ENCODE measurements at regions of chr11 and their contacts with region 1.

Region 1: DNA sequence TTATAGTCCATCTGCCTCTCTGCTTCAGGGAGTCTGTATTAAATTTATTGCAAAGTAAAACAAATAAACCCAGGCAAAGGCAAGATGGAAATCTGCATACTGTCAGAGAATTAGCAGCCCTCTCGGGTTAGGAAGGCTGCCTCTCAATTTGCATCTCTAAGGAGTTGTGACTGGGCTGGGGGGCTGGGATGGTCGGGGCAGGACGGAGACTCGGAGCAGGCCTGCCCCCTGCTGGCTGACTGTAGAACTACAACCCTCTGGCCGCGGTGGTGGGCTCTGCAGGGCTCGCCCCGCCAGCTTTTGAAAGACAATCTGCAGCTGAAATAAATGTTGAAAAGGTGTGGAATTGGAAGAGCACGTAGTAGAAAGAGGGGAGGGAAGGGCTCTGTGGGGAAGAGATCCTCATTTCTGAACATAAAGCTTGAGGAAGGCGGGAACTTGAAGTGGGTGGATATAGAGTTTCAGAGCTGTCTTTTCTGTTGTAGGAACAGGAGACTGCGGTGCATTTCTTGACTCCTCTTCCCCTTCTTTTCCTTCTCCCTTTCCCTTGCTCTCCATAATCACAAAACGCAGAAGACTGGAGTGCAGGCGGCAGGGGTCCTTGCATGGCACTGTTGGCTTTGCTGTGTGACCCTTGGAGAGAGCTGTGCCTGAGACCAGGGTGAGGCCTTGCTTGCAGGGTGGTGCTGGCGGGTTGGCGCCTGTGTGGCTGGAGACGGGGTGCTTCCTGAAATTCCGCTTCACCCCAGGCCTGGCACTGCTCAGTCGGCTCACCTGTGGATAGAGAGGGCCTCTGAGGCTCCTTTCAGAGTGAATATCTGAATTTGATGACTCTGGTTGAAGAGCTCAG is 22.6 kb upstream of the PKNOX2 start:
- DNase-seq: no peak
- H3K4me3 ChIP-seq: no peak overlapping the region
- H3K27ac ChIP-seq: no peak overlapping the region
- H3K4me1 ChIP-seq: peaks cover 0 to 6% (median 2%) of the 10 kb centered on the region in 4 donors
- H3K27me3 ChIP-seq: peaks cover 0 to 17% (median 0%) of the 10 kb centered on the region in 3 donors
- CTCF ChIP-seq: peak; percentile 72 to 97 (median 93)
- EP300 ChIP-seq: no peak
- POLR2A ChIP-seq: no peak

Region 2: DNA sequence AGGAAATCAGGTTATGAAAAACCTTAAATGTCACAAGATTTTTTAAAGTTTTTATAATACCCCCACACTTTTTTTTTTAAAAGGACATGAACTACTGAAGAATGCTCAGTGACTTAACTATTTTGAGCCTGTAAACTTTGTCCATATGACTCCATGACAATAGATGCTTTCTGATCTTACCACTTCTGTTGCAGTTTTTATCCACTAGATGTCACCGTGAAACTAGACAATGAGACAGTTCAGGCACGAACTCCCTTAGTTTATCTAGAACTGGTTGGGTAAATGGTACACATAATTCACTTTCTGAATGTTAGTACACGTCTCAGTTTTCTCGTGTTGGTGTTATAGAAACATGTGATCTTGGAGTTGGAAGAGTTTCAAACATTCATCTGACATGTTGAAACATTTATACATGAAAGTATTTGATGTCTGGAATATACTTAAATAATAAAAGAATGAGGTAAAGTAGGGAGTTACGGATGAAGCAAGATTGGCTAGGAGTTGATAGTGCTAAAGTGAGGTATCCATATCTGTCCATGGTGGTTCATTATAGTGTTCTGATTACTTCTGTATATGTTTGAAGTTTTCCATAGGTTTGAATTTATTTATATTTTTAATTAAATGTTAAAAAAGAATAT is 179.8 kb before region 1 on chr11:
- intact Hi-C with region 1: loop called (anchors 1 kb)
- DNase-seq: no peak
- H3K4me3 ChIP-seq: no peak overlapping the region
- H3K27ac ChIP-seq: no peak overlapping the region
- H3K4me1 ChIP-seq: no peaks in the 10 kb centered on the region
- H3K27me3 ChIP-seq: no peaks in the 10 kb centered on the region
- CTCF ChIP-seq: peak; percentile 35 to 69 (median 51)
- EP300 ChIP-seq: no peak
- POLR2A ChIP-seq: no peak

Region 3: DNA sequence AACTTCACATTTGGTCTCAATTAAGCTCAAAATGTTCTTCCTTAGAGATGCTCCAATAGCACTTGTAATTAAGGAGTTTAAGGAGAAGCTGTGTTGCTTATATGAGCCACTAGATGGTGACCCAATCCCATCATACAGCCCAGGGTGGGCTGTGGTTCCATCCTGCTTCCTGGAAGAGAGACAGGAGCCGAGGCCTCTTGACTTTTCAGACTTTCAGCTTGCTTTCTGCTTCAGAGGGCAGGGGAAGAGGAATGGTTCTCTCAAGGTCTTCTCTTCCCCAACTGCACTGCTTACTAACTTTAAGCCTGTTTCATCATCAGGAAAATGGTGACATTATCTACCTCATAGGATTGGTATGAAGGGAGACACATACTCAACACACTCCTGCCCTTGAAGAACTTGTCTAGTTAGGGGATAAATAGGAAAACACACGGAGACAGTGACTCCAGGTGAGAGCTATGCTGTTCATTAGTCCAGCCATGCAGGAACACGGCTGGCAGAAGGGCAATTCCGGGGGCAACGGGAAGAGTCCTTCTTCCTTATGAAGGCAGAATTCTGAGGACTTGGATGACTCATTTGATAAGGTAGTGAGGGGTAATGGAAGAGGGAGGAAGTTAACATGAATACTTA is 50.5 kb before region 1 on chr11:
- intact Hi-C with region 1: loop called (anchors 2 kb)
- DNase-seq: peak; percentile 62
- H3K4me3 ChIP-seq: no peak overlapping the region
- H3K27ac ChIP-seq: no peak overlapping the region
- H3K4me1 ChIP-seq: peaks cover 0 to 7% (median 3%) of the 10 kb centered on the region in 4 donors
- H3K27me3 ChIP-seq: no peaks in the 10 kb centered on the region
- CTCF ChIP-seq: peak; percentile 34 to 58 (median 48)
- EP300 ChIP-seq: no peak
- POLR2A ChIP-seq: no peak

Region 4: GRCh38 chr11:125224391-125225010 is 82.6 kb after region 1 on chr11:
- intact Hi-C with region 1: no loop called
- DNase-seq: peak; percentile 68
- H3K4me3 ChIP-seq: no peak overlapping the region
- H3K27ac ChIP-seq: peak overlapping the region; percentile 11 to 52 (median 40)
- H3K4me1 ChIP-seq: peaks cover 0 to 11% (median 2%) of the 10 kb centered on the region in 4 donors
- H3K27me3 ChIP-seq: no peaks in the 10 kb centered on the region
- CTCF ChIP-seq: peak in 1 of 4 experiments; percentile 12
- EP300 ChIP-seq: no peak
- POLR2A ChIP-seq: no peak